ENCODE measurements at regions of chr2 and their contacts with region 1.

Region 1: DNA sequence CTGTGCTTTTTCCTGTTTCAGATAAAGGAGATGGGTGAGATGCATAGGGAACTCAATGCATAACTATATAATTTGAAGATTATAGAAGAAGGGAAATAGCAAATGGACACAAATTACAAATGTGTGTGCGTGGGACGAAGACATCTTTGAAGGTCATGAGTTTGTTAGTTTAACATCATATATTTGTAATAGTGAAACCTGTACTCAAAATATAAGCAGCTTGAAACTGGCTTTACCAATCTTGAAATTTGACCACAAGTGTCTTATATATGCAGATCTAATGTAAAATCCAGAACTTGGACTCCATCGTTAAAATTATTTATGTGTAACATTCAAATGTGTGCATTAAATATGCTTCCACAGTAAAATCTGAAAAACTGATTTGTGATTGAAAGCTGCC is 16.4 kb upstream of the MSH2 start:
- DNase-seq: no peak
- H3K4me3 ChIP-seq: no peak overlapping the region
- H3K4me3 Mint-ChIP-seq: no peak overlapping the region
- H3K27ac Mint-ChIP-seq: no peak overlapping the region
- H3K4me1 ChIP-seq: no peaks in the 10 kb centered on the region
- H3K4me1 Mint-ChIP-seq: no peaks in the 10 kb centered on the region
- H3K27me3 ChIP-seq: no peaks in the 10 kb centered on the region
- H3K27me3 Mint-ChIP-seq: no peaks in the 10 kb centered on the region
- CTCF ChIP-seq: no peak

Region 2: DNA sequence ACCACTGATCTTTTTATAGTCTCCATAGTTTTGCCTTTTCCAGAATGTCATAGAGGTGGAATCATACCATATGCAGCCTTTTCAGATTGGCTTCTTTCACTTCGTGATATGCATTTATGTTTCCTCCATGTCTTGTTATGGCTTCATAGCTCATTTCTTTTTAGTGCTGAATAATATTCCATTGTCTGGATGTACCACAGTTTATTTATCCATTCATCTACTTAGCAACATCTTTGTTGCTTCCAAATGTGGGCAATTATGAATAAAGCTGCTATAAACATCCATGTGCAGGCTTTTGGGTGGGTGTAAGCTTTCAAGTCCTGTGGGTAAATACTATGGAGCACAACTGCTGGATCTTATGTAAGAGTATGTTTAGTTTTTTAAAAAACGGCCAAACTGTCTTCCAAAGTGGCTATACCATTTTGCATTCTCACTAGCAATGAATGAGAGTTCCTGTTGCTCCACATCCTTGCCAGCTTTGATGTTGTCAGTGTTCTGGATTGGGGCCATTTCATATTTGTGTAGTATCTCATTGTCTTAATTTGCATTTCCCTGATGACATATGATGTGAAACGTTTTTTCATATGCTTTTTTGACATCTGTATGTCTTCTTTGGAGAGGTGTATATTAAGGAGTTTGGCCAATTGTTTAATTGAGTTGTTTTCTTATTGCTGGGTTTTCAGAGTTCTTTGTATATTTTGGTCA is 252.0 kb before region 1 on chr2:
- CTCF ChIA-PET with region 1: no interaction called
- POLR2A ChIA-PET with region 1: no interaction called
- intact Hi-C with region 1: no loop called
- DNase-seq: no peak
- H3K4me3 ChIP-seq: no peak overlapping the region
- H3K4me3 Mint-ChIP-seq: no peak overlapping the region
- H3K27ac Mint-ChIP-seq: no peak overlapping the region
- H3K4me1 ChIP-seq: peaks cover 2% of the 10 kb centered on the region; the same call in 1 of the 2 replicates
- H3K4me1 Mint-ChIP-seq: peaks cover 20% of the 10 kb centered on the region
- H3K27me3 ChIP-seq: no peaks in the 10 kb centered on the region
- H3K27me3 Mint-ChIP-seq: no peaks in the 10 kb centered on the region
- CTCF ChIP-seq: no peak

Region 3: GRCh38 chr2:47373747-47374146 is 12.8 kb before region 1 on chr2:
- CTCF ChIA-PET with region 1: interaction called, 8 read pairs
- POLR2A ChIA-PET with region 1: no interaction called
- intact Hi-C with region 1: loop called (anchors 1 kb)
- DNase-seq: peak; percentile 74 to 78
- H3K4me3 ChIP-seq: no peak overlapping the region
- H3K4me3 Mint-ChIP-seq: no peak overlapping the region
- H3K27ac Mint-ChIP-seq: no peak overlapping the region
- H3K4me1 ChIP-seq: peaks cover 30% of the 10 kb centered on the region
- H3K4me1 Mint-ChIP-seq: peaks cover 11% of the 10 kb centered on the region
- H3K27me3 ChIP-seq: no peaks in the 10 kb centered on the region
- H3K27me3 Mint-ChIP-seq: no peaks in the 10 kb centered on the region
- CTCF ChIP-seq: peak; percentile 47 to 83

Region 4: DNA sequence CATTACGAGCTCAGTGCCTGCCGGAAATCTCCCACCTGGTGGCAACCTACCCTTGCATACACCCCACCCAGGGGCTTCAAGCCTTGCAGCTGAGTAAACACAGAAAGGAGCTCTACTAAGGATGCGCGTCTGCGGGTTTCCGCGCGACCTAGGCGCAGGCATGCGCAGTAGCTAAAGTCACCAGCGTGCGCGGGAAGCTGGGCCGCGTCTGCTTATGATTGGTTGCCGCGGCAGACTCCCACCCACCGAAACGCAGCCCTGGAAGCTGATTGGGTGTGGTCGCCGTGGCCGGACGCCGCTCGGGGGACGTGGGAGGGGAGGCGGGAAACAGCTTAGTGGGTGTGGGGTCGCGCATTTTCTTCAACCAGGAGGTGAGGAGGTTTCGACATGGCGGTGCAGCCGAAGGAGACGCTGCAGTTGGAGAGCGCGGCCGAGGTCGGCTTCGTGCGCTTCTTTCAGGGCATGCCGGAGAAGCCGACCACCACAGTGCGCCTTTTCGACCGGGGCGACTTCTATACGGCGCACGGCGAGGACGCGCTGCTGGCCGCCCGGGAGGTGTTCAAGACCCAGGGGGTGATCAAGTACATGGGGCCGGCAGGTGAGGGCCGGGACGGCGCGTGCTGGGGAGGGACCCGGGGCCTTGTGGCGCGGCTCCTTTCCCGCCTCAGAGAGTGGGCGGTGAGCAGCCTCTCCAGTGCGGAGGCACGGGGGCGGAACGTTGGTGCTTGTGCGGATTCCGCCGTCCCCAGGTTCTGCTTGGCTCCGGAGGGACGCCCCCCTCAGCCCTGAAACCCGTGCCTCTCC is 16.5 kb after region 1 on chr2 and contains the start of gene MSH2:
- CTCF ChIA-PET with region 1: interaction called, 19 read pairs
- POLR2A ChIA-PET with region 1: interaction called, 8 read pairs
- intact Hi-C with region 1: no loop called
- DNase-seq: peak; percentile 96
- H3K4me3 ChIP-seq: peak within 1 kb of the TSS; percentile 85
- H3K4me3 Mint-ChIP-seq: peak within 1 kb of the TSS; percentile 97
- H3K27ac Mint-ChIP-seq: peak within 1 kb of the TSS; percentile 91
- H3K4me1 ChIP-seq: peaks cover 6% of the 10 kb centered on the region
- H3K4me1 Mint-ChIP-seq: peaks cover 9% of the 10 kb centered on the region
- H3K27me3 ChIP-seq: no peaks in the 10 kb centered on the region
- H3K27me3 Mint-ChIP-seq: no peaks in the 10 kb centered on the region
- CTCF ChIP-seq: peak in 1 of 2 experiments; percentile 3
- total RNA-seq, gene MSH2: 70.5 and 72.5 TPM in 2 replicates

Region 5: GRCh38 chr2:47429795-47430194 is 43.2 kb after region 1 on chr2:
- CTCF ChIA-PET with region 1: no interaction called
- POLR2A ChIA-PET with region 1: no interaction called
- intact Hi-C with region 1: no loop called
- DNase-seq: no peak
- H3K4me3 ChIP-seq: no peak overlapping the region
- H3K4me3 Mint-ChIP-seq: no peak overlapping the region
- H3K27ac Mint-ChIP-seq: no peak overlapping the region
- H3K4me1 ChIP-seq: no peaks in the 10 kb centered on the region
- H3K4me1 Mint-ChIP-seq: no peaks in the 10 kb centered on the region
- H3K27me3 ChIP-seq: no peaks in the 10 kb centered on the region
- H3K27me3 Mint-ChIP-seq: no peaks in the 10 kb centered on the region
- CTCF ChIP-seq: no peak

Measured in Caco-2 (cell line).